Activated naive CD4-positive, alpha-beta T cell treated with anti-CD3 and anti-CD28 coated beads for 36 hours (primary cell): ENCODE measurements at regions of chr11 and their contacts with region 1.

Region 1: GRCh38 chr11:111283945-111284481 is 14.3 kb upstream of the POU2AF3 start:
- DNase-seq: no peak
- H3K4me3 Mint-ChIP-seq: no peak overlapping the region
- H3K27ac Mint-ChIP-seq: no peak overlapping the region
- H3K4me1 Mint-ChIP-seq: no peaks in the 10 kb centered on the region
- H3K27me3 Mint-ChIP-seq: no peaks in the 10 kb centered on the region

Region 2: GRCh38 chr11:111359223-111360149 is 75.5 kb after region 1 on chr11:
- CTCF ChIA-PET with region 1: interaction called, 4 read pairs
- intact Hi-C with region 1: loop called (anchors 5 kb)
- DNase-seq: no peak
- H3K4me3 Mint-ChIP-seq: no peak overlapping the region
- H3K27ac Mint-ChIP-seq: no peak overlapping the region
- H3K4me1 Mint-ChIP-seq: no peaks in the 10 kb centered on the region
- H3K27me3 Mint-ChIP-seq: no peaks in the 10 kb centered on the region

Region 3: GRCh38 chr11:111429066-111429506 is 145.1 kb after region 1 on chr11:
- CTCF ChIA-PET with region 1: interaction called, 210 read pairs
- intact Hi-C with region 1: loop called (anchors 1 kb)
- DNase-seq: peak; percentile 88
- H3K4me3 Mint-ChIP-seq: no peak overlapping the region
- H3K27ac Mint-ChIP-seq: no peak overlapping the region
- H3K4me1 Mint-ChIP-seq: no peaks in the 10 kb centered on the region
- H3K27me3 Mint-ChIP-seq: no peaks in the 10 kb centered on the region

Region 4: DNA sequence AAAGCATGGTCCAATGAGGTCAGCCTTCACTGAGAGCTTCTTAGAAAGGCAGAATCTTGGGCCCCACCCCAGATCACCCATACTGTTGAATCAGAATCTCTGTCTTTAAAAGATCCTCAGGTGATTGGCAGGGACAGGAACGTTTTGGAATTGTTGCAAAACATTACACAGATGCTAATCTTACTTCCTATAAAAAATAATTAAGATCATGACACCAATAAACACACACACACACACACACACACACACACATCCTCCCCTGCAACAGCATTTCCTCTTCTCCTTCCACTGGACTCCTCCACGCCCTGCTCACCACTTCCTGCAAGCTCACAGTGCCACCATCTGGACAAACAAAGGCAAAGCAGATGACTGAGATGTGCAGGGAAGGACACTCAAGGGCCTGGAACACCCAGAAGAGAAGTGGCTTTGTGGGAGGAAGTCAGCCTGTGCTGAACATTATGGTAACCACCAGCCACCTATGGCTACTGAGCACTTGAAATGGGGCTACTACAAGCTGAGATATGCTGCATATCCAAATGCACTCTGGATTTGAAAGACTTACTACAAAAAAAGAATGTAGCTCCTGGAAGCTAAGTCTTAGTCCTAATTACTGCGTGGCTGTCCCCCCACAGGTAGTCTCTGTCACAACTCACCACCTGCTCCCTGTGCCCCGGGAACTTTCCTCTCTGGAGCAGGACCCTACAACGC is 162.5 kb after region 1 on chr11:
- CTCF ChIA-PET with region 1: interaction called, 51 read pairs
- intact Hi-C with region 1: loop called (anchors 1 kb)
- DNase-seq: peak; percentile 87
- H3K4me3 Mint-ChIP-seq: no peak overlapping the region
- H3K27ac Mint-ChIP-seq: no peak overlapping the region
- H3K4me1 Mint-ChIP-seq: peaks cover 16% of the 10 kb centered on the region
- H3K27me3 Mint-ChIP-seq: no peaks in the 10 kb centered on the region

Region 5: GRCh38 chr11:111841370-111842053 is 557.5 kb after region 1 on chr11:
- CTCF ChIA-PET with region 1: no interaction called
- intact Hi-C with region 1: loop called (anchors 10 kb)
- DNase-seq: peak; percentile 96
- H3K4me3 Mint-ChIP-seq: no peak overlapping the region
- H3K27ac Mint-ChIP-seq: no peak overlapping the region
- H3K4me1 Mint-ChIP-seq: no peaks in the 10 kb centered on the region
- H3K27me3 Mint-ChIP-seq: no peaks in the 10 kb centered on the region